CD4-positive, alpha-beta T cell (primary cell): ENCODE measurements at regions of chr2 and their contacts with region 1.

Region 1: GRCh38 chr2:74046441-74046840 is 61.7 kb downstream of the TET3 start:
- DNase-seq: no peak
- ATAC-seq: no peak
- H3K4me3 ChIP-seq: no peak overlapping the region
- H3K4me3 Mint-ChIP-seq: no peak overlapping the region
- H3K27ac ChIP-seq: no peak overlapping the region
- H3K27ac Mint-ChIP-seq: no peak overlapping the region
- H3K4me1 ChIP-seq: no peaks in the 10 kb centered on the region
- H3K4me1 Mint-ChIP-seq: peaks cover 66% of the 10 kb centered on the region
- H3K27me3 ChIP-seq: no peaks in the 10 kb centered on the region
- H3K27me3 Mint-ChIP-seq: no peaks in the 10 kb centered on the region
- CTCF ChIP-seq: no peak

Region 2: GRCh38 chr2:73611867-73612266 is 434.6 kb before region 1 on chr2:
- CTCF ChIA-PET with region 1: no interaction called
- POLR2A ChIA-PET with region 1: no interaction called
- intact Hi-C with region 1: no loop called
- DNase-seq: no peak
- ATAC-seq: no peak
- H3K4me3 ChIP-seq: no peak overlapping the region
- H3K4me3 Mint-ChIP-seq: no peak overlapping the region
- H3K27ac ChIP-seq: no peak overlapping the region
- H3K27ac Mint-ChIP-seq: no peak overlapping the region
- H3K4me1 ChIP-seq: no peaks in the 10 kb centered on the region
- H3K4me1 Mint-ChIP-seq: no peaks in the 10 kb centered on the region
- H3K27me3 ChIP-seq: no peaks in the 10 kb centered on the region
- H3K27me3 Mint-ChIP-seq: no peaks in the 10 kb centered on the region
- CTCF ChIP-seq: no peak

Region 3: GRCh38 chr2:73995810-73996209 is 50.6 kb before region 1 on chr2:
- CTCF ChIA-PET with region 1: no interaction called
- POLR2A ChIA-PET with region 1: no interaction called
- intact Hi-C with region 1: loop called in 1 of 2 experiments (anchors 2 kb)
- DNase-seq: no peak
- ATAC-seq: no peak
- H3K4me3 ChIP-seq: no peak overlapping the region
- H3K4me3 Mint-ChIP-seq: no peak overlapping the region
- H3K27ac ChIP-seq: no peak overlapping the region
- H3K27ac Mint-ChIP-seq: no peak overlapping the region
- H3K4me1 ChIP-seq: peaks cover 61% of the 10 kb centered on the region
- H3K4me1 Mint-ChIP-seq: peaks cover 80% of the 10 kb centered on the region
- H3K27me3 ChIP-seq: no peaks in the 10 kb centered on the region
- H3K27me3 Mint-ChIP-seq: no peaks in the 10 kb centered on the region
- CTCF ChIP-seq: no peak